Head of caudate nucleus (tissue), 42 donors: ENCODE measurements at regions of chr20 and their contacts with region 1.

Region 1: DNA sequence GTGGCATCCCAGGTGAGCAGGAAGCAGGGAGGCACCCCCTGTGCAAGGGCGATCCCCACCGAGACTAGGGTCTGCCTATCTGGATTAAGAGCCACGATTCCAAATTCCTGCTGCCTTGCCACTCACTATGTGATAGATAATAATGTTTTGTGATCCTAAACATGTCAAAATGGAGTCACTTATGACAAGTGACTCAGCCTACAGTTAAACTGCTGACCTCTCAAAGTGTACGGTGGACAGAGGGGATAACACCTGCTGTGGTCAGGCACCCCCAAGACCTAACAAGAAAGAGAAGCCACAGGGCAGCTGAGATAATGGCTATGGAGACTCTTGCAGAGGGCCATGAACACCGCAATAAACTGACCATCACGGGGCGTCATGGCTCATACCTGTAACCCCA is 16.0 kb upstream of the SNTA1 start:
- DNase-seq: no peak

Region 2: DNA sequence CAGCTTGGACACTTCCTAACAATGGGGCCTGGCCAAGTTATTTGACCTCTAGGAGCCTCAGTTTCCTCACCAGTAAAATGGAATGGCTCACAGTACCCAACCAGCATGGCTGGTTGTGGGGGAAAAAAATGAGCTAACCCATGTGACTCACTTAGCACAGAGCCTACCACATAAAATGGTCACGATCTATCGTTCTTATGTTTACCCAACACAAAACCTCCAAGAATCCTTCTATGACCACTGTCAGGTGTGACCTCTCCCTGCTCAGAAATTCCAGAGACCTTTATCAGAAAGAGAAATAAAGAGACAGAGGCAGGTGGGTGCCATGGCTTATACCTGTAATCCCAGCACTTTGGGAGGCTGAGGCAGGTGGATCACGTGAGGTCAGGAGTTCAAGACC is 137.1 kb before region 1 on chr20:
- intact Hi-C with region 1: no loop called
- DNase-seq: no peak

Region 3: GRCh38 chr20:33653218-33653899 is 193.8 kb after region 1 on chr20:
- intact Hi-C with region 1: loop called (anchors 5 kb)
- DNase-seq: peak in 41 of 42 donors; percentile 47 to 88 (median 68)

Region 4: GRCh38 chr20:33666293-33667244 is 207.0 kb after region 1 on chr20 and contains the start of gene ACTL10:
- intact Hi-C with region 1: loop called (anchors 5 kb)
- DNase-seq: peak; percentile 87 to 98 (median 94)

Region 5: GRCh38 chr20:33702861-33703260 is 243.3 kb after region 1 on chr20:
- intact Hi-C with region 1: no loop called
- DNase-seq: peak in 1 of 42 donors; percentile 20

Region 6: DNA sequence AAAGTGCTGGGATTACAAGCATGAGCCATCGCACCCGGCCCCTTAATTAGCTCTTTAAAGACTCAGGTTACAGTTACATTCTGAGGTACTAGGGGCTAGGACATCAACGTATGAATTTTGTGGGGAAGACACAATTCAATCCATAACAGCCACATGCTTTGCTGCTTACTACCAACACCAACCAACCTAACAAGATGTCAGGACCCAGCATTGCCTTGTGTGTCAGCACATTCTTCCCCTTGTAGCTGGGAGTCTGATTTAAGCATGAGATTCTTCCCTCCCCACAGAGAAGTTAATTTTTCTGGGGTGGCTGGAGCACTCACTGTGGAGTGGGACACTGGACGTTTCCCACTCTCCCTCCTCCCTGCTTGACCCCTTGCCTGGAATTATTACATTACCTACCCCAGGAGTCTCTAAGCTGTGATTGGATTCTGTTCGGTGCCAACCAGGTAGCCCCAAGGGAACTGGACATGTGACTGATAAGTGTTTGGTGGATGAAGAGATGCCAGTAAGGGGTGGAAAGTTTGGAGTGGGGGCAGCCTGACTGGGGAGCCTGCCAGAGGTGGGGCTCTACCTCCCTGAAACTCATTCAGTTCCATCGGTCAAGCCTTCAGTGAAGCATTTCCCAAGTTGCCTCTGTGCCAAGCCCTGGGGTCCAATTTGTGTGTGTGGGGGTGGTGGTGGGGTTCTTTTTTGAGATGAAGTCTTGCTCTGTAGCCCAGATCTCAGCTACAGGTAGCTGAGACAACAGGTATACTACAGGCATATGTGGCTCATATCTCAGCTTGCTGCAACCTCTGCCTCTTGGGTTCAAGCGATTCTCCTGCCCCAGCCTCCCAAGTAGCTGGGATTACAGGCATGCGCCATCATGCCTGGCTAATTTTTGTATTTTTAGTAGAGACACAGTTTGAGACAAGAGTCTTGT is 266.3 kb after region 1 on chr20:
- intact Hi-C with region 1: loop called (anchors 5 kb)
- DNase-seq: no peak